Activated CD4-positive, alpha-beta memory T cell treated with anti-CD3 and anti-CD28 coated beads for 36 hours (primary cell): ENCODE measurements at regions of chr7 and their contacts with region 1.

Region 1: DNA sequence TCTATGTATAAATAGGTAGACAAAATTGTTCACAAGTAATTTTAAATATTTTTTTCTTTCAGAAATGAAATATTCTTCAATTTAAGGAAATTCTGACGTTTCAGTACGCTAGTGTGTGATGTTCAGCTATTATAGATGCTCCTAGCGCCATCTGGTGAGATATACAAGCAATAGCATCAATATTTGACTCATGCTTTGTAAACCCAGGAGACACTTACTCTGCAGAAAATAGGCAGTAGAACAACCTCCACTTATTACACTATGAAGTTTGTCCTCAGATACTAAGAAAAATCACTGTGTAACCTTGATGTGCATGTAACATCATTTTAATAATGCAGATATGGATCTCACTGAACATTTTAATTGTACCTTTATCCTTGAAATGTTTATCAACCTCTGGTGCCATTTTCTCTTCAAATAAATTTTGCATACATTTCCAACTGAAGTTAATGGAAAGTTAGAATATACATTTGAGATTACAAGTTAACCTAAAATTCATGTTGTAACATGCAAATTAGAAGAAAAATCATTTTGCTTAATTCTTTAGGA is 151.5 kb upstream of the FAM3C start:
- DNase-seq: no peak
- H3K4me3 Mint-ChIP-seq: no peak overlapping the region
- H3K27ac Mint-ChIP-seq: no peak overlapping the region
- H3K4me1 Mint-ChIP-seq: peaks cover 29% of the 10 kb centered on the region
- H3K27me3 Mint-ChIP-seq: no peaks in the 10 kb centered on the region

Region 2: DNA sequence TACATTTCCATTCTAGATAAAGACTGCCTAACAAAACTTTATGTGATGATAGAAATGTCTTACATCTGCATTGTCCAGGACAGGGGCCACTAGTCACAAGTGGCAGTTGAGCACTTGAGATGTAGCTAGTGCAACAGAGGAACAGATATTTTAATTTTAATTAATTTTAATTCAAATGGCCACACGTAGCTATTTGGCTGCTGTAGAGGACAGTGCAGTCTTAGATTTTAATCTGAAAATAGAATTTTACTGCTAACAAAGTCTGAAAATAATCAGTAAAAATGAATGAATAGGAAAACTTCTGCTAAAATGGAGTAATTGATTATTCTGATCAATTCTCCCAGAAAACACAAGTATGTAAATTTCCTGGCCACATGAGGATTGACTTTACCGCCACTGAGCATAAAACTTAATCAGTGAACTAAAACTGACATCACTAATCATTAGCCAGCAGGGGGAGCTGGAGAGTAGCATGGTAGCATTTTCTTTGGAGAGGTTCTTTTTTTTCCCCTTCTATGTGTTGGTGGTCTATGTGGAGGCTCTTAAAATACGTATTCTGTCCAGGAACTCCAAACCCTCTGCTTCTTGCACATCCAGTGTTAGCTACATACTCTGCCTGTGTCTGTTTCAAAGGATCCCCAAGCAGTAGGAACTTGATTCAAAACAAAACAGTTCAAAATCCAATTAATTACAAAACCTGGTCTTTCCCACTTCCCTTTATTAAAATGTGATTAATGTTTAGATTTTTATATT is 741.8 kb before region 1 on chr7:
- CTCF ChIA-PET with region 1: no interaction called
- POLR2A ChIA-PET with region 1: no interaction called
- intact Hi-C with region 1: loop called (anchors 10 kb)
- DNase-seq: peak; percentile 48
- H3K4me3 Mint-ChIP-seq: no peak overlapping the region
- H3K27ac Mint-ChIP-seq: no peak overlapping the region
- H3K4me1 Mint-ChIP-seq: no peaks in the 10 kb centered on the region
- H3K27me3 Mint-ChIP-seq: peaks cover 6% of the 10 kb centered on the region

Region 3: DNA sequence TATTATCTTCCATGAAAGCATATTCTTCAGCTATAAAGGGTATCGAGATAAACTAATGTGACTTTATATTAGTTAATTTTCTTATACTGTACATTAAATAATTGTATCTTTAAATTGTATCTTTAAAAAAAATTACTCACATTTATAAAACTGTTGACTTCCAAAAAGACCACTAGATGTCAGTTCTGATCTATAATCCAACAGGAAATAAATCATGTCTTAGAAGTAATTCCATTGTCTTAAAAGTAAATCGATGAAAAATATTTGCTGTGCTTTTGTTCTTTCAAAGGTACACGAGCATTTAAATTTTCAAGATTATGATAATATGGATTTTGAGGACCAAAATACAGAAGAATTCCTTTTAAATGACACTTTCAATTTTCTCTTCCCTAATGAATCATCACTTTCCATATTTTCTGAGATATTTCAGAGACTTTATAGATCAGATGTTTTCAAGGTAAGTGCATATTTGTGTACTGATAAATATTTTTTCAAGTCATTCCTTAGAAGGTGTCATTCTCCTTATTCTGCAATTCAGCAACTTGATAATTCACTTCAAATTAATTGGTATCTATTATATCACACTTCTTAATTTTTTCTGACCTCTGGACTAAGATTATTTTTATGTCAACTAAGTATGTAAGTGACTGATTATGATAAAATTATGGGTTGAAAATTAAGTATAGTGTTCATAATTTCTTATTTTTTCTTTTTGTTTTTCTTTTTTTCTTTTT is 420.6 kb before region 1 on chr7:
- CTCF ChIA-PET with region 1: no interaction called
- POLR2A ChIA-PET with region 1: no interaction called
- intact Hi-C with region 1: loop called (anchors 5 kb)
- DNase-seq: no peak
- H3K4me3 Mint-ChIP-seq: no peak overlapping the region
- H3K27ac Mint-ChIP-seq: no peak overlapping the region
- H3K4me1 Mint-ChIP-seq: no peaks in the 10 kb centered on the region
- H3K27me3 Mint-ChIP-seq: peaks cover 2% of the 10 kb centered on the region

Region 4: GRCh38 chr7:121278120-121279021 is 269.2 kb before region 1 on chr7:
- CTCF ChIA-PET with region 1: interaction called, 3 read pairs
- POLR2A ChIA-PET with region 1: no interaction called
- intact Hi-C with region 1: loop called (anchors 1 kb)
- DNase-seq: no peak
- H3K4me3 Mint-ChIP-seq: no peak overlapping the region
- H3K27ac Mint-ChIP-seq: no peak overlapping the region
- H3K4me1 Mint-ChIP-seq: peaks cover 16% of the 10 kb centered on the region
- H3K27me3 Mint-ChIP-seq: peaks cover 30% of the 10 kb centered on the region

Region 5: GRCh38 chr7:121395961-121396757 is 151.5 kb before region 1 on chr7 and contains the start of gene FAM3C:
- CTCF ChIA-PET with region 1: interaction called, 17 read pairs
- POLR2A ChIA-PET with region 1: interaction called, 5 read pairs
- intact Hi-C with region 1: loop called (anchors 1 kb)
- DNase-seq: peak; percentile 92
- H3K4me3 Mint-ChIP-seq: peak within 1 kb of the TSS; percentile 85
- H3K27ac Mint-ChIP-seq: peak within 1 kb of the TSS; percentile 90
- H3K4me1 Mint-ChIP-seq: peaks cover 36% of the 10 kb centered on the region
- H3K27me3 Mint-ChIP-seq: no peaks in the 10 kb centered on the region
- total RNA-seq, gene FAM3C: 17.2 to 18.3 TPM

Region 6: GRCh38 chr7:121500360-121501058 is 47.1 kb before region 1 on chr7:
- CTCF ChIA-PET with region 1: interaction called, 4 read pairs
- POLR2A ChIA-PET with region 1: interaction called, 3 read pairs
- intact Hi-C with region 1: loop called (anchors 1 kb)
- DNase-seq: peak; percentile 33
- H3K4me3 Mint-ChIP-seq: no peak overlapping the region
- H3K27ac Mint-ChIP-seq: peak overlapping the region; percentile 32
- H3K4me1 Mint-ChIP-seq: peaks cover 17% of the 10 kb centered on the region
- H3K27me3 Mint-ChIP-seq: no peaks in the 10 kb centered on the region

Region 7: GRCh38 chr7:121676168-121676567 is 128.6 kb after region 1 on chr7:
- CTCF ChIA-PET with region 1: no interaction called
- POLR2A ChIA-PET with region 1: no interaction called
- intact Hi-C with region 1: no loop called
- DNase-seq: no peak
- H3K4me3 Mint-ChIP-seq: no peak overlapping the region
- H3K27ac Mint-ChIP-seq: no peak overlapping the region
- H3K4me1 Mint-ChIP-seq: no peaks in the 10 kb centered on the region
- H3K27me3 Mint-ChIP-seq: peaks cover 2% of the 10 kb centered on the region

Region 8: GRCh38 chr7:121994625-121995410 is 447.2 kb after region 1 on chr7:
- CTCF ChIA-PET with region 1: no interaction called
- POLR2A ChIA-PET with region 1: no interaction called
- intact Hi-C with region 1: loop called (anchors 2 kb)
- DNase-seq: peak; percentile 54
- H3K4me3 Mint-ChIP-seq: no peak overlapping the region
- H3K27ac Mint-ChIP-seq: no peak overlapping the region
- H3K4me1 Mint-ChIP-seq: no peaks in the 10 kb centered on the region
- H3K27me3 Mint-ChIP-seq: no peaks in the 10 kb centered on the region